Activated naive CD4-positive, alpha-beta T cell treated with anti-CD3 and anti-CD28 coated beads for 36 hours (primary cell): ENCODE measurements at regions of chr13 and their contacts with region 1.

Region 1: GRCh38 chr13:110382229-110382628 is 75.1 kb downstream of the COL4A2 start:
- DNase-seq: peak; percentile 52
- H3K4me3 Mint-ChIP-seq: no peak overlapping the region
- H3K27ac Mint-ChIP-seq: no peak overlapping the region
- H3K4me1 Mint-ChIP-seq: peaks cover 9% of the 10 kb centered on the region
- H3K27me3 Mint-ChIP-seq: peaks cover 14% of the 10 kb centered on the region

Region 2: GRCh38 chr13:110126391-110126961 is 255.8 kb before region 1 on chr13:
- CTCF ChIA-PET with region 1: no interaction called
- intact Hi-C with region 1: no loop called
- DNase-seq: no peak
- H3K4me3 Mint-ChIP-seq: no peak overlapping the region
- H3K27ac Mint-ChIP-seq: no peak overlapping the region
- H3K4me1 Mint-ChIP-seq: no peaks in the 10 kb centered on the region
- H3K27me3 Mint-ChIP-seq: peaks cover 46% of the 10 kb centered on the region

Region 3: GRCh38 chr13:110319774-110320509 is 62.3 kb before region 1 on chr13:
- CTCF ChIA-PET with region 1: no interaction called
- intact Hi-C with region 1: loop called (anchors 2 kb)
- DNase-seq: peak; percentile 80
- H3K4me3 Mint-ChIP-seq: no peak overlapping the region
- H3K27ac Mint-ChIP-seq: peak overlapping the region; percentile 59
- H3K4me1 Mint-ChIP-seq: peaks cover 13% of the 10 kb centered on the region
- H3K27me3 Mint-ChIP-seq: peaks cover 34% of the 10 kb centered on the region

Region 4: GRCh38 chr13:110354715-110355473 is 27.3 kb before region 1 on chr13:
- CTCF ChIA-PET with region 1: no interaction called
- intact Hi-C with region 1: loop called (anchors 2 kb)
- DNase-seq: peak; percentile 15
- H3K4me3 Mint-ChIP-seq: no peak overlapping the region
- H3K27ac Mint-ChIP-seq: peak overlapping the region; percentile 61
- H3K4me1 Mint-ChIP-seq: peaks cover 5% of the 10 kb centered on the region
- H3K27me3 Mint-ChIP-seq: peaks cover 2% of the 10 kb centered on the region

Region 5: GRCh38 chr13:110680851-110681250 is 298.6 kb after region 1 on chr13:
- CTCF ChIA-PET with region 1: no interaction called
- intact Hi-C with region 1: no loop called
- DNase-seq: peak; percentile 8
- H3K4me3 Mint-ChIP-seq: no peak overlapping the region
- H3K27ac Mint-ChIP-seq: no peak overlapping the region
- H3K4me1 Mint-ChIP-seq: no peaks in the 10 kb centered on the region
- H3K27me3 Mint-ChIP-seq: no peaks in the 10 kb centered on the region

Region 6: GRCh38 chr13:110915057-110915873 is 533.0 kb after region 1 on chr13 and contains the start of gene ANKRD10:
- CTCF ChIA-PET with region 1: no interaction called
- intact Hi-C with region 1: no loop called
- DNase-seq: peak; percentile 97
- H3K4me3 Mint-ChIP-seq: peak within 1 kb of the TSS; percentile 85
- H3K27ac Mint-ChIP-seq: peak within 1 kb of the TSS; percentile 93
- H3K4me1 Mint-ChIP-seq: peaks cover 43% of the 10 kb centered on the region
- H3K27me3 Mint-ChIP-seq: no peaks in the 10 kb centered on the region
- total RNA-seq, gene ANKRD10: 79.8 to 82.5 TPM